Left lung (tissue), 14 donors: ENCODE measurements at regions of chr4 and their contacts with region 1.

Region 1: DNA sequence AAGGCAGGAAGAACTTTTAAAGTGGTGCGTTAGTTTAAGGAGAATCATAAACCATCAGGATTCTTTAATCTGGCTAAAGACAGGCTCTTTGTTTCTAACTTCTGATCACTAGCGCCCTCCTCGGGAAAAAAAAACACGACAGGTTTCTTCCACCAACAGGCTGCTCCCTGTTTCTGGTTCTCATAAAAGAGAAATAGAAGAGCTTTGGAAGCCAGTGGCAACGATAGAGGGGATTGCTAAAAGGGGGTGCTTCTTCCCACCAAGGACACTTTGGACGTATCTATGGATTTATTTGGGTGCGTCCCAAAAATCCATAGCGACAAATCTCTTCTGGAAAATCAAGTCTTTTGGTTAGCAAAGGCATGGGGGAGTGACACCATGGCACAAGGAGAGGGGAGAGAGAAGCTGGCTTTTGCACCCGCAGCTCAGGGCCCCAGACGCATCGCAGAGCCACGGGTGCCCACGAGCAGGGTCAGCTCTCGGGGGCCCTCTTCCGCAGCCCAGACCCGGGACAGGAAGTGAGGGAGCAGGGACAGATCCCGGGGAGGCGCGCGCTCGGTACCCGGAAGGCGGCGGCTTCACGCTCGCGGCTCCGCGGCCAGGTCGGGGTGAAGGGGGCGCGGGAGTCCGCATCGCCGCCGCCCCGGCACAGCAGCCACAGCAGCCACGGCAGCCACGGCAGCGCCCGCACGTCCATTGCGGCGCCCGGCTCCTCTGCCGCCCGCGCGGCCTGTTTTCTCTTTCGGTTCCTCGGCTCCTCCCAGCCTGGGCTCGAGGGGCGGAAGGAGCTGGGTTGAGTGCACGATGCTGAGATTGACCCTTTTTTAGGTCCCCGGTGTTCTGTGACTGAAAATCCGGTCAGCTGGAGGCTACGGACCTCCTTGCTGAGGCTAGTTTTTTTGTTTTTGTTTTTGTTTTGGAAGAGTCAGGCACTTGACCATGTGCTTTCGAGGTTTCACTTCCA is at the start of gene CTSO:
- DNase-seq: peak; percentile 80 to 92 (median 86)
- ATAC-seq: peak; percentile 96
- H3K4me3 ChIP-seq: peak within 1 kb of the TSS; percentile 54 to 64
- H3K27ac ChIP-seq: peak within 1 kb of the TSS; percentile 98 to 100
- H3K4me1 ChIP-seq: peaks cover 0 to 14% of the 10 kb centered on the region in 2 donors
- H3K27me3 ChIP-seq: no peaks in the 10 kb centered on the region
- CTCF ChIP-seq: peak; percentile 48 to 49
- polyA plus RNA-seq, gene CTSO: 49.3 to 63.8 (median 60.0) TPM

Region 2: DNA sequence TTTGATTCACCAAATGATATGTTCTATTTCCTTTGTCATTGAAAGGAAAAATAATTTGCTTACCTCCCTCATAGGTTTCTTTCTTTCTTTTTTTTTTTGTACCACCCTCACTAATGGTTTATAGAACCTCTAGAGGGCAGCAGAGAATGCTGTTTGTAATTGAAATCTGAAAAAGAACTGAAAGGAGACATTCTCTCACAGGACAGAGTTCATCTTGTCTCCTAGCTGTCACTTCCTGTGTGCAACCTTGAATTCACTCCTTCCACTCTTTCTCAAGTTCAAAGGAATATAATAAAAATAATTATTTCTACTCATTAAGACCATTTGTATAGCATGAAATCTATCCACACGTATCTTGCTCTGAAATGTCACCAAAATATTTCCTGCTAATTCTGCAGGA is 143.6 kb before region 1 on chr4:
- intact Hi-C with region 1: loop called in 1 of 2 experiments (anchors 5 kb)
- DNase-seq: peak in 1 of 4 donors; percentile 73
- ATAC-seq: peak; percentile 89
- H3K4me3 ChIP-seq: no peak overlapping the region
- H3K27ac ChIP-seq: no peak overlapping the region
- H3K4me1 ChIP-seq: peaks cover 0 to 7% of the 10 kb centered on the region in 2 donors
- H3K27me3 ChIP-seq: no peaks in the 10 kb centered on the region
- CTCF ChIP-seq: peak; percentile 58 to 76

Region 3: GRCh38 chr4:155881555-155881954 is 71.9 kb before region 1 on chr4:
- intact Hi-C with region 1: no loop called
- DNase-seq: no peak
- ATAC-seq: no peak
- H3K4me3 ChIP-seq: no peak overlapping the region
- H3K27ac ChIP-seq: no peak overlapping the region
- H3K4me1 ChIP-seq: no peaks in the 10 kb centered on the region
- H3K27me3 ChIP-seq: no peaks in the 10 kb centered on the region
- CTCF ChIP-seq: no peak